ENCODE measurements at regions of chr17 and their contacts with region 1.

Region 1: GRCh38 chr17:66348584-66349165 is 46.3 kb downstream of the PRKCA start:
- DNase-seq: no peak
- H3K4me3 Mint-ChIP-seq: peak overlapping the region; percentile 19
- H3K27ac Mint-ChIP-seq: peak overlapping the region; percentile 76
- H3K4me1 Mint-ChIP-seq: peaks cover 76% of the 10 kb centered on the region
- H3K27me3 Mint-ChIP-seq: no peaks in the 10 kb centered on the region

Region 2: DNA sequence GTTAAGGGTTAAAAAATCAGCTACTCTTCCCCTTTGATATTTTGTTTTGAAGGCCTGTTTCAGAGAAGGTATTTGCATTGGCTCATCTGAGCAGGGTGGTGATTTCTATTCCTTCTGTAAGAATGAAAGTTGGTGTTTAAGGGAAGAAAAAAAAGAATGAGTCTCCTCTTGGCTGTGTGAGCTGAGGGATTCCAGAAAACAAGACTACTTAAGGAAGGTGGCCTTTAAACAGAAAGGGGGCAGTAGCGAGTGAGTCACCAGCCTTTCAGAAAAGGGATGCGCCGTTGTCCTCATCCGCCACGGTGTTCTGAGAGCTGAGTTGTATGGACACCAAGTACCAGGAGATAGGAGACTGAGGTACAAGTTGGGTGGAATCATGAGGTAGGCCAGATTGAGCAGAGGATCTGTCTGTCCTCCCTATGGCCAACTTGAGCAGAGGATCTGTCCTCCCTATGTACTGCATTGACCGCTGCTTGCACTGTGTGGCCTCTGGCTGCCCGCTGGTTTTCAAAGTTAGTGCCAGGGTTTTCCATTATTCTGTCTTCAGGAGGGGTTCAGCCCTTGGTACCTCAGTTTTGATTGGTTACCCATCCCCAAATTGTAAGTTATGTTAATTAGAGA is 38.0 kb before region 1 on chr17:
- intact Hi-C with region 1: loop called (anchors 5 kb)
- DNase-seq: no peak
- H3K4me3 Mint-ChIP-seq: peak overlapping the region; percentile 71
- H3K27ac Mint-ChIP-seq: peak overlapping the region; percentile 92
- H3K4me1 Mint-ChIP-seq: peaks cover 84% of the 10 kb centered on the region
- H3K27me3 Mint-ChIP-seq: no peaks in the 10 kb centered on the region

Region 3: GRCh38 chr17:66331038-66331816 is 17.4 kb before region 1 on chr17:
- intact Hi-C with region 1: loop called (anchors 2 kb)
- DNase-seq: peak; percentile 29
- H3K4me3 Mint-ChIP-seq: peak overlapping the region; percentile 69
- H3K27ac Mint-ChIP-seq: peak overlapping the region; percentile 96
- H3K4me1 Mint-ChIP-seq: peaks cover 73% of the 10 kb centered on the region
- H3K27me3 Mint-ChIP-seq: no peaks in the 10 kb centered on the region

Region 4: GRCh38 chr17:66337866-66338485 is 10.7 kb before region 1 on chr17:
- intact Hi-C with region 1: loop called (anchors 1 kb)
- DNase-seq: no peak
- H3K4me3 Mint-ChIP-seq: no peak overlapping the region
- H3K27ac Mint-ChIP-seq: peak overlapping the region; percentile 48
- H3K4me1 Mint-ChIP-seq: peaks cover 68% of the 10 kb centered on the region
- H3K27me3 Mint-ChIP-seq: no peaks in the 10 kb centered on the region